ENCODE measurements at regions of chr14 and their contacts with region 1.

Region 1: DNA sequence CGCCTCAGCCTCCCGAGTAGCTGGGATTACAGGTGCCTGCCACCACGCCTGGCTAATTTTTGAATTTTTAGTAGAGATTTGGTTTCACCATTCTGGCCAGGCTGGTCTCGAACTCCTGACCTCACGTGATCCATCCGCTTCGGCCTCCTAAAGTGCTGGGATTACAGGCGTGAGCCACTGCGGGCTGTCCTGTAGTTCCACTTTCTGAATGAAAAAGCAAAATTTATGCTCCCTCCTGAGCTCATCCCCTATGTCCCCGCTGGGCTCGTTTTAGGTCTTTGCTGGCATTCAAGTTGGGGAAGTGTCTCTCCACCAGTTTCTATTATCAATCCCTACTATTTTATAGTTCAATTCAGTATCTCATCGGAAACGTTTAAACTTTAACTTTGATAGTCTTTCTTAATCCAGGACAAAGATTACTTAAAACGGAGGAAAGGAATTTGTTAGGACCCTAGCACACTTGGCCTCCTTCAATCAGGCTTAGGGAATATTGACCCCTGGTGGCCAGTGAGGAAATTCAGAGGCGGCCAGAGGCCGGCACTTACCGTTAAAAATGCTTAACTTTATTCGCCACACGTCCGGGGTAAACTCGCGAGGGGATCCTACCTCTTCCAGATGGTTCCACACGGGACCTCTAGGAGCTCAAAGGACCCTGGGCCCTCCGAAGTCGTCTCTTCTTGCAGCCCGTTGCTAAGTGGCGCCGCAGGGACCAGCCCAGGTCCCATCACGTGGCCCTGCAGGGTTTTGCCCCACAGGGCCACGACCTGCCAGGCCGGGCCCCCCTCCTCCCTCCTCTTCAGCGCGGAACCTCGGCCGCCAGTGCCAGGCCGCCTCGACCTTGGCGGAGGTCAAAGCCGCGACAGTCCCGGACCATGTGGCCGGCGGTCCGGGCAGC is 11.4 kb upstream of the DNAL1 start:
- DNase-seq: peak; percentile 80
- H3K4me3 Mint-ChIP-seq: peak overlapping the region; percentile 60
- H3K27ac Mint-ChIP-seq: no peak overlapping the region
- H3K4me1 Mint-ChIP-seq: peaks cover 4% of the 10 kb centered on the region
- H3K27me3 Mint-ChIP-seq: no peaks in the 10 kb centered on the region
- CTCF ChIP-seq: peak; percentile 87

Region 2: GRCh38 chr14:73526569-73526968 is 106.8 kb before region 1 on chr14:
- CTCF ChIA-PET with region 1: interaction called, 13 read pairs
- POLR2A ChIA-PET with region 1: no interaction called
- intact Hi-C with region 1: no loop called
- DNase-seq: peak; percentile 75
- H3K4me3 Mint-ChIP-seq: no peak overlapping the region
- H3K27ac Mint-ChIP-seq: peak overlapping the region; percentile 67
- H3K4me1 Mint-ChIP-seq: peaks cover 17% of the 10 kb centered on the region
- H3K27me3 Mint-ChIP-seq: no peaks in the 10 kb centered on the region
- CTCF ChIP-seq: no peak

Region 3: DNA sequence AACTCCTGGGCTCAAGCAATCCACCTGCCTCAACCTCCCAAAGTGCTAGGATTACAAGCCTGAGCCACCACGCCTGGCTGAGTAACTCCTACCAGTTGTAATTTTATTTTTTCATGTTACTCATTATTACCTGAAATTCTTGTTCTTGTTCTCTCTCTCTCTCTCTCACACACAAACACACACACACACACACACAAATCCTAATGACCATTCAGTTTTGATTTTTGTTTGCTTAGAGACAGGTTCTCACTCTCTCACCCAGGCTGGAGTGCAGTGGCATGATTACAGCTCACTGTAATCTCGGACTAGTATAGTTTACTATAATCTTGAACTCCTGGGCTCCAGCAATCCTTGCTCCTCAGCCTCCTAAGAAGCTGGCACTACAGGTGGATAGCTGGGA is 41.7 kb after region 1 on chr14:
- CTCF ChIA-PET with region 1: no interaction called
- POLR2A ChIA-PET with region 1: no interaction called
- intact Hi-C with region 1: no loop called
- DNase-seq: no peak
- H3K4me3 Mint-ChIP-seq: no peak overlapping the region
- H3K27ac Mint-ChIP-seq: no peak overlapping the region
- H3K4me1 Mint-ChIP-seq: no peaks in the 10 kb centered on the region
- H3K27me3 Mint-ChIP-seq: no peaks in the 10 kb centered on the region
- CTCF ChIP-seq: no peak

Measured in MCF 10A (cell line).